ENCODE measurements at regions of chr4 and their contacts with region 1.

Region 1: GRCh38 chr4:100762738-100763137 is 244.9 kb upstream of the EMCN start:
- DNase-seq: no peak
- ATAC-seq: no peak
- H3K4me3 ChIP-seq: no peak overlapping the region
- H3K4me3 Mint-ChIP-seq: no peak overlapping the region
- H3K27ac ChIP-seq: no peak overlapping the region
- H3K27ac Mint-ChIP-seq: no peak overlapping the region
- H3K4me1 ChIP-seq: no peaks in the 10 kb centered on the region
- H3K4me1 Mint-ChIP-seq: no peaks in the 10 kb centered on the region
- H3K27me3 ChIP-seq: no peaks in the 10 kb centered on the region
- H3K27me3 Mint-ChIP-seq: peaks cover 4% of the 10 kb centered on the region
- CTCF ChIP-seq: no peak

Region 2: GRCh38 chr4:99205153-99205979 is 1557.4 kb before region 1 on chr4:
- CTCF ChIA-PET with region 1: no interaction called
- POLR2A ChIA-PET with region 1: no interaction called
- intact Hi-C with region 1: loop called in 1 of 2 experiments (anchors 10 kb)
- DNase-seq: no peak
- ATAC-seq: no peak
- H3K4me3 ChIP-seq: no peak overlapping the region
- H3K4me3 Mint-ChIP-seq: no peak overlapping the region
- H3K27ac ChIP-seq: no peak overlapping the region
- H3K27ac Mint-ChIP-seq: no peak overlapping the region
- H3K4me1 ChIP-seq: no peaks in the 10 kb centered on the region
- H3K4me1 Mint-ChIP-seq: no peaks in the 10 kb centered on the region
- H3K27me3 ChIP-seq: no peaks in the 10 kb centered on the region
- H3K27me3 Mint-ChIP-seq: no peaks in the 10 kb centered on the region
- CTCF ChIP-seq: no peak

Region 3: DNA sequence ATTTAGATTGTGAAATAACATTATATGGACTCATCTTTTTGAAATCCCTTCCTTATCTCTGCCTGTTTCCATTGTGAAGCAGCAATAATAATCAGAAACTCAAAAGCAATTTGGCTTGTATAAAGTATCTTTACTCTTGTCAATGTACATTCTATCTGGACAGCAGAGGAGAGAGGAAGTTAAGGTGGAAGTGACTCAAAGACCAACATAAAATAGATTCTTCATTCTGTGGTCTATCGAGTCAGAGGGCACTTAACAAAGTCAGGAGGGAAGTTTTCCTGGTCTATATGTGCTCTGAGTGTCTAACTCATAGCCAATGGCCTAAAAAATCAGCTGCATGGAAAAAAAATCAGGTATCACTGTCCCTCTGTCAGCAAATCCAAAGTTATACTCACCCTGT is 400.4 kb before region 1 on chr4:
- CTCF ChIA-PET with region 1: no interaction called
- POLR2A ChIA-PET with region 1: no interaction called
- intact Hi-C with region 1: no loop called
- DNase-seq: no peak
- ATAC-seq: no peak
- H3K4me3 ChIP-seq: no peak overlapping the region
- H3K4me3 Mint-ChIP-seq: no peak overlapping the region
- H3K27ac ChIP-seq: no peak overlapping the region
- H3K27ac Mint-ChIP-seq: no peak overlapping the region
- H3K4me1 ChIP-seq: no peaks in the 10 kb centered on the region
- H3K4me1 Mint-ChIP-seq: no peaks in the 10 kb centered on the region
- H3K27me3 ChIP-seq: no peaks in the 10 kb centered on the region
- H3K27me3 Mint-ChIP-seq: peaks cover 3% of the 10 kb centered on the region
- CTCF ChIP-seq: no peak

Region 4: GRCh38 chr4:100679926-100680325 is 82.8 kb before region 1 on chr4:
- CTCF ChIA-PET with region 1: no interaction called
- POLR2A ChIA-PET with region 1: no interaction called
- intact Hi-C with region 1: no loop called
- DNase-seq: no peak
- ATAC-seq: no peak
- H3K4me3 ChIP-seq: no peak overlapping the region
- H3K4me3 Mint-ChIP-seq: no peak overlapping the region
- H3K27ac ChIP-seq: no peak overlapping the region
- H3K27ac Mint-ChIP-seq: no peak overlapping the region
- H3K4me1 ChIP-seq: no peaks in the 10 kb centered on the region
- H3K4me1 Mint-ChIP-seq: no peaks in the 10 kb centered on the region
- H3K27me3 ChIP-seq: no peaks in the 10 kb centered on the region
- H3K27me3 Mint-ChIP-seq: peaks cover 5% of the 10 kb centered on the region
- CTCF ChIP-seq: no peak

Region 5: GRCh38 chr4:100981447-100982204 is 218.9 kb after region 1 on chr4:
- CTCF ChIA-PET with region 1: no interaction called
- POLR2A ChIA-PET with region 1: no interaction called
- intact Hi-C with region 1: no loop called
- DNase-seq: peak in 2 of 14 experiments; percentile 27 to 51
- ATAC-seq: no peak
- H3K4me3 ChIP-seq: no peak overlapping the region
- H3K4me3 Mint-ChIP-seq: no peak overlapping the region
- H3K27ac ChIP-seq: no peak overlapping the region
- H3K27ac Mint-ChIP-seq: no peak overlapping the region
- H3K4me1 ChIP-seq: no peaks in the 10 kb centered on the region
- H3K4me1 Mint-ChIP-seq: no peaks in the 10 kb centered on the region
- H3K27me3 ChIP-seq: no peaks in the 10 kb centered on the region
- H3K27me3 Mint-ChIP-seq: no peaks in the 10 kb centered on the region
- CTCF ChIP-seq: no peak

Region 6: GRCh38 chr4:101114936-101115372 is 352.2 kb after region 1 on chr4:
- CTCF ChIA-PET with region 1: no interaction called
- POLR2A ChIA-PET with region 1: no interaction called
- intact Hi-C with region 1: no loop called
- DNase-seq: no peak
- ATAC-seq: no peak
- H3K4me3 ChIP-seq: no peak overlapping the region
- H3K4me3 Mint-ChIP-seq: no peak overlapping the region
- H3K27ac ChIP-seq: no peak overlapping the region
- H3K27ac Mint-ChIP-seq: no peak overlapping the region
- H3K4me1 ChIP-seq: no peaks in the 10 kb centered on the region
- H3K4me1 Mint-ChIP-seq: no peaks in the 10 kb centered on the region
- H3K27me3 ChIP-seq: no peaks in the 10 kb centered on the region
- H3K27me3 Mint-ChIP-seq: no peaks in the 10 kb centered on the region
- CTCF ChIP-seq: no peak

Measured in CD4-positive, alpha-beta T cell (primary cell).